Naive thymus-derived CD4-positive, alpha-beta T cell (primary cell): ENCODE measurements at regions of chrX and their contacts with region 1.

Region 1: DNA sequence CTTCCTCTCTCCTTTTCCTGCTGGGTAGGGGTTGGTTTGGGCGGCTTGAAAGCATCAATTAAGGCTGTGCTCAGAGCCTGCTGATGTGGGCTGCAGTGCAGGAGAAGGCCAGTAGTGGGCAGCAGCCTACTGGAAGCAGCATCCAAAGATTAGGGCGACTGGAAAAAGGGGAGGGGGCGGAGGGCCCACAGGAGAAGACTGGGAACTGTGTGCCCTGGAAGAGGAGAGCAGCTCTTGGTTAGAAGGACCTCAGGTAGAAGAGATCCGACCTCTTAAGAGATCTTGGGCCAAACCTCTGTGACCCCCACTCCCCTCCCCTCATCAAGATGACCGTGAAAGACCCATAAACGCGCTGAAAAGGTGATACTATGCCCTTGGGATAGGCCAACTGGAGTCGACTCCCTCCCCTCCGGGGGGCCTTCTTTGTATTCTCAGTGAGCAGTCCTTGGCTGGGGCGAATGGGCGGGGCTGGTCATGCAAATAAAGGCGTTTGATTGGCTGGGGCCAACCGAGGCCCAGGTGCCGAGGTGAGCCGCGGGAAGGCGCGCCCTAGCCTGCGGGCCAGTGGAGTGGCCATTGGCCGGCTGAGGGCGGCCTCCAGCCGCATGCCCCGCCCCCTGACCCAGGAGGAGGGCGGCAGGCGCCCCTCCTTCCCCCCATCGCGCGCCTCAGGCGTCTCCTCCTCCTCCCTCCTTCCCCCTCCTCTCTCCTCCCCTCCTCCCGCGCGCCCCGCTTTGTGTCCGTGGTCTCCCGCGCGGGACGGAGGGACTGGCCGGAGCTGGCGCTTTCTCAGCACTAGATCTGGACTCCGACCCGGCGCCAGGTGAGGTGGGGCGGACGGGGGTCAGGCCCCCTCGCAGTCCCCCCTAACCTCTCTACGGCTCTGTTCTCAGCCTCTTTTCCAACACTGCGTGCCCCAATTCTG is 10.1 kb downstream of the DLG3 start:
- DNase-seq: peak in 8 of 9 donors; percentile 39 to 72 (median 52)
- ATAC-seq: peak; percentile 80
- H3K4me3 ChIP-seq: peak overlapping the region; percentile 57
- H3K4me3 Mint-ChIP-seq: peak overlapping the region; percentile 66 to 93 (median 86)
- H3K27ac ChIP-seq: peak overlapping the region; percentile 60
- H3K27ac Mint-ChIP-seq: peak overlapping the region; percentile 40 to 95 (median 79)
- H3K4me1 ChIP-seq: peaks cover 8 to 11% of the 10 kb centered on the region in 2 donors
- H3K4me1 Mint-ChIP-seq: peaks cover 12 to 45% (median 32%) of the 10 kb centered on the region in 7 donors
- H3K27me3 ChIP-seq: no peaks in the 10 kb centered on the region
- H3K27me3 Mint-ChIP-seq: no peaks in the 10 kb centered on the region

Region 2: DNA sequence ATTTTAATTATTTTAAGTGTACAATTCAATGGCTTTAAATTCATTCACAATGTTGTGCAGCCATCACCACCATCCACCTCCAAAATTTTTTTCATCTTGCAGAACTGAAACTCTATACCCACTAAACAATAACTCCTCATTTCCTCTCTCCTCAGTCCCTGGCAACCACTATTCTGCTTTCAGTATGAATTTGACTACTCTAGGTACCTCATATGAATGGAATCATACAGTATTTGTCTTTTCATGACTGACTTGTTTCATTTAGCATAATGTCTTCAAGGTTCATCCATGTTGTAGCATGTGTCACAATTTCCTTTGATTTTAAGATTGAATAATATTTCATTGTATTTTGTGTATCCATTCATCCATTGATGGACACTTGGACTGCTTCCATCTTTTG is 117.9 kb before region 1 on chrX:
- CTCF ChIA-PET with region 1: no interaction called
- POLR2A ChIA-PET with region 1: no interaction called
- intact Hi-C with region 1: no loop called
- DNase-seq: no peak
- ATAC-seq: no peak
- H3K4me3 ChIP-seq: no peak overlapping the region
- H3K4me3 Mint-ChIP-seq: peak overlapping the region in 1 of 10 donors; percentile 39
- H3K27ac ChIP-seq: no peak overlapping the region
- H3K27ac Mint-ChIP-seq: peak overlapping the region in 1 of 9 donors; percentile 51
- H3K4me1 ChIP-seq: no peaks in the 10 kb centered on the region
- H3K4me1 Mint-ChIP-seq: peaks cover 0 to 15% (median 0%) of the 10 kb centered on the region in 7 donors
- H3K27me3 ChIP-seq: no peaks in the 10 kb centered on the region
- H3K27me3 Mint-ChIP-seq: no peaks in the 10 kb centered on the region

Region 3: GRCh38 chrX:70433848-70434351 is 20.8 kb before region 1 on chrX:
- CTCF ChIA-PET with region 1: interaction called, 4 read pairs
- POLR2A ChIA-PET with region 1: no interaction called
- intact Hi-C with region 1: loop called (anchors 1 kb)
- DNase-seq: peak; percentile 49 to 77 (median 73)
- ATAC-seq: peak; percentile 95
- H3K4me3 ChIP-seq: peak overlapping the region; percentile 79
- H3K4me3 Mint-ChIP-seq: peak overlapping the region; percentile 84 to 94 (median 90)
- H3K27ac ChIP-seq: peak overlapping the region; percentile 41
- H3K27ac Mint-ChIP-seq: peak overlapping the region; percentile 71 to 94 (median 89)
- H3K4me1 ChIP-seq: peaks cover 0 to 3% of the 10 kb centered on the region in 2 donors
- H3K4me1 Mint-ChIP-seq: peaks cover 0 to 24% (median 9%) of the 10 kb centered on the region in 7 donors
- H3K27me3 ChIP-seq: no peaks in the 10 kb centered on the region
- H3K27me3 Mint-ChIP-seq: peaks cover 0 to 18% (median 8%) of the 10 kb centered on the region in 5 donors

Region 4: DNA sequence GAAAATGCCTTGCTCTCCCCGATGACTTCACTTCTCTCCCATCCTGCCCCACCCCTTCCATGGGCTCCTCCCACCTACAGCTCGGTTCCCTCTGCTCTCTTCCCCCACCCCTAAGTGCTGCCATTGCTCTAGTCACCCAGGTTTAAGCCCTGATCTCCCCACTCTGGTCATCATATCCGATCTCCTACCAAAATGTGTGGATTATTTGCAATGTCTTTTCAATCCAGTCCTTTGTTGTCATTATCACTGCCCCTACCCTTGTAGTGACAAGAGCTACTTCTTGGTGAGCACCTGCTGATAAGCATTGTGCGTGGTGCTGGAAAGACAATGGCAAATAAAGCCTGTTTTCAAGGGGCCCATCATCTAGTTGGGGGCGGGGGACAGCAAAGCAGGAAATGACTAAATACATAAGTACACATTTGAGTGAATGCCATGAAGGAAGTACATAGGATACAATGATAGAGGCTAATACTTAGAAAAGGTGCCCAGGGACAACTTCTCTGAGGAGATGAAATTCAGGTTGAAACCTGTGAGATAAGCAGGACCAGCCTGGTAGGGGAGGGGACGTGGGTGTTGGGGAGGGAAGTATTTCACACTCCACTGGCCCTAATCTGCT is 53.7 kb after region 1 on chrX:
- CTCF ChIA-PET with region 1: no interaction called
- POLR2A ChIA-PET with region 1: no interaction called
- intact Hi-C with region 1: loop called in 1 of 2 experiments (anchors 5 kb)
- DNase-seq: peak in 1 of 9 donors; percentile 20
- ATAC-seq: no peak
- H3K4me3 ChIP-seq: no peak overlapping the region
- H3K4me3 Mint-ChIP-seq: peak overlapping the region in 1 of 10 donors; percentile 4
- H3K27ac ChIP-seq: no peak overlapping the region
- H3K27ac Mint-ChIP-seq: peak overlapping the region in 1 of 9 donors; percentile 6
- H3K4me1 ChIP-seq: no peaks in the 10 kb centered on the region
- H3K4me1 Mint-ChIP-seq: peaks cover 0 to 40% (median 0%) of the 10 kb centered on the region in 7 donors
- H3K27me3 ChIP-seq: no peaks in the 10 kb centered on the region
- H3K27me3 Mint-ChIP-seq: peaks cover 0 to 10% (median 0%) of the 10 kb centered on the region in 5 donors

Region 5: DNA sequence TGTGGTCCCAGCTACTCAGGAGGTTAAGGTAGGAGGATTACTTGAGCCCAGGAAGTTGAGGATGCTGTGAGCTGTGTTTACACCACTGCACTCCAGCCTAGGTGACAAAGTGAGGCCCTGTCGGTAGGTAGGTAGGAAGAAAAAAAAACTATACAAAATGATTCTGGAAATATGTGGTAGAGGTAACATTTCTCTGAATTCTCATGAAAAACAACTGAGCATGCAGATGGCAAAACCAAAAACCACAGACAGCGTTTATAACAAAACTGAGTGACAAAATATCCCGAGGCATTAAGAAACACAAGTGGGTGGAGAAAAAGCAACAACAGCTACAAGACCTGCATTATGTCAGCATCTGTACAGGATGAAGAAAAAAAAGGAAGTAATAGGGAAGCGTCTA is 201.6 kb after region 1 on chrX:
- CTCF ChIA-PET with region 1: no interaction called
- POLR2A ChIA-PET with region 1: no interaction called
- intact Hi-C with region 1: loop called in 1 of 2 experiments (anchors 2 kb)
- DNase-seq: peak in 1 of 9 donors; percentile 1
- ATAC-seq: no peak
- H3K4me3 ChIP-seq: no peak overlapping the region
- H3K4me3 Mint-ChIP-seq: peak overlapping the region in 2 of 10 donors; percentile 2 to 35
- H3K27ac ChIP-seq: no peak overlapping the region
- H3K27ac Mint-ChIP-seq: peak overlapping the region in 4 of 9 donors; percentile 41 to 81 (median 45)
- H3K4me1 ChIP-seq: no peaks in the 10 kb centered on the region
- H3K4me1 Mint-ChIP-seq: peaks cover 0 to 7% (median 4%) of the 10 kb centered on the region in 7 donors
- H3K27me3 ChIP-seq: no peaks in the 10 kb centered on the region
- H3K27me3 Mint-ChIP-seq: peaks cover 0 to 3% (median 0%) of the 10 kb centered on the region in 5 donors

Region 6: GRCh38 chrX:70769659-70770232 is 315.0 kb after region 1 on chrX:
- CTCF ChIA-PET with region 1: no interaction called
- POLR2A ChIA-PET with region 1: no interaction called
- intact Hi-C with region 1: loop called (anchors 5 to 10 kb)
- DNase-seq: peak in 1 of 9 donors; percentile 0
- ATAC-seq: no peak
- H3K4me3 ChIP-seq: no peak overlapping the region
- H3K4me3 Mint-ChIP-seq: no peak overlapping the region
- H3K27ac ChIP-seq: no peak overlapping the region
- H3K27ac Mint-ChIP-seq: no peak overlapping the region
- H3K4me1 ChIP-seq: no peaks in the 10 kb centered on the region
- H3K4me1 Mint-ChIP-seq: no peaks in the 10 kb centered on the region
- H3K27me3 ChIP-seq: no peaks in the 10 kb centered on the region
- H3K27me3 Mint-ChIP-seq: peaks cover 0 to 6% (median 0%) of the 10 kb centered on the region in 5 donors

Region 7: GRCh38 chrX:71068049-71068763 is 613.5 kb after region 1 on chrX and contains the start of gene SNX12:
- CTCF ChIA-PET with region 1: no interaction called
- POLR2A ChIA-PET with region 1: no interaction called
- intact Hi-C with region 1: loop called (anchors 1 to 10 kb)
- DNase-seq: peak; percentile 66 to 93 (median 88)
- ATAC-seq: peak; percentile 99
- H3K4me3 ChIP-seq: peak within 1 kb of the TSS; percentile 81
- H3K4me3 Mint-ChIP-seq: peak within 1 kb of the TSS; percentile 76 to 98 (median 94)
- H3K27ac ChIP-seq: peak within 1 kb of the TSS; percentile 86
- H3K27ac Mint-ChIP-seq: peak within 1 kb of the TSS; percentile 90 to 98 (median 97)
- H3K4me1 ChIP-seq: peaks cover 0 to 4% of the 10 kb centered on the region in 2 donors
- H3K4me1 Mint-ChIP-seq: peaks cover 9 to 24% (median 18%) of the 10 kb centered on the region in 7 donors
- H3K27me3 ChIP-seq: no peaks in the 10 kb centered on the region
- H3K27me3 Mint-ChIP-seq: peaks cover 0 to 12% (median 0%) of the 10 kb centered on the region in 5 donors
- total RNA-seq, gene SNX12: 19.0 to 41.6 (median 37.3) TPM

Region 8: DNA sequence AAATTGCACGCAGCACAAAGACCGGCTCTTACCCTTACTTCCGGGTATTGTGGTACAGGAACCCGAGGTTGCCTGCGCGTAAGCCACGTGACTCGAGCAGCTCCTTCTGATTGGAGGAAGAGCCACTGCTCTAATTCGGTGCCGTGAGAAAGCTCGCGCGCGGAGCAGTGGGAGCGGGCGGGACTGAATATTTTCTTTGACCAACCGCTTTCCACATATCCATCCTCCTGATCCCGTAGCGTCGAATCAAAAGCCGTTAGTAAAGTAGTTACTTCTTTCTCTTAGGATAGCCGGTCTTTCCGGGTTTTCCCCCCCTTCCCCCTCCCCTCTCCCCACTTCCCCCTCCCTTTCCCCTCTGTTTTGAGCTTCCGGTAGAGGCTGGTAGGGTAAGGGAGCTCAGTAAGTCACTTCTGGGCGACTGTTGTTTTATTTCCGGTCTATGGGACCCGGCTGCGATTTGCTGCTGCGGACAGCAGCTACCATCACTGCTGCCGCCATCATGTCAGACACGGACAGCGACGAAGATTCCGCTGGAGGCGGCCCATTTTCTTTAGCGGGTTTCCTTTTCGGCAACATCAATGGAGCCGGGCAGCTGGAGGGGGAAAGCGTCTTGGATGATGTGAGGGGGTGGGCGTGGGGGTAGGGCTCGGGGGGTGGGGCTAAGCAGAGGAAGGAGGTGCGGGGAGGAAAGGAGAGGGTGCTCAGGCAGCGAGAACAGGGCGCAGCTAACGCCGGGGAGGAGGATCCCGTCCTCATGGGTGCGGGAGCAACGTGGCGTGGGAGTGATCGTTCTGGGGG is 911.4 kb after region 1 on chrX and contains the start of gene TAF1:
- CTCF ChIA-PET with region 1: no interaction called
- POLR2A ChIA-PET with region 1: no interaction called
- intact Hi-C with region 1: loop called in 1 of 2 experiments (anchors 5 kb)
- DNase-seq: peak; percentile 61 to 94 (median 90)
- ATAC-seq: peak; percentile 93
- H3K4me3 ChIP-seq: peak within 1 kb of the TSS; percentile 81
- H3K4me3 Mint-ChIP-seq: peak within 1 kb of the TSS; percentile 86 to 99 (median 96)
- H3K27ac ChIP-seq: peak within 1 kb of the TSS; percentile 94
- H3K27ac Mint-ChIP-seq: peak within 1 kb of the TSS; percentile 97 to 100 (median 98)
- H3K4me1 ChIP-seq: peaks cover 5 to 9% of the 10 kb centered on the region in 2 donors
- H3K4me1 Mint-ChIP-seq: peaks cover 12 to 34% (median 27%) of the 10 kb centered on the region in 7 donors
- H3K27me3 ChIP-seq: no peaks in the 10 kb centered on the region
- H3K27me3 Mint-ChIP-seq: no peaks in the 10 kb centered on the region
- total RNA-seq, gene TAF1: 55.4 to 86.7 (median 76.1) TPM